ENCODE measurements at regions of chr12 and their contacts with region 1.

Region 1: GRCh38 chr12:47837190-47838171 is 17.8 kb upstream of the HDAC7 start:
- DNase-seq: peak; percentile 77
- ATAC-seq: no peak
- H3K4me3 Mint-ChIP-seq: peak overlapping the region; percentile 31
- H3K27ac Mint-ChIP-seq: peak overlapping the region; percentile 79
- H3K4me1 Mint-ChIP-seq: peaks cover 57% of the 10 kb centered on the region
- H3K27me3 Mint-ChIP-seq: no peaks in the 10 kb centered on the region
- CTCF ChIP-seq: peak; percentile 96

Region 2: DNA sequence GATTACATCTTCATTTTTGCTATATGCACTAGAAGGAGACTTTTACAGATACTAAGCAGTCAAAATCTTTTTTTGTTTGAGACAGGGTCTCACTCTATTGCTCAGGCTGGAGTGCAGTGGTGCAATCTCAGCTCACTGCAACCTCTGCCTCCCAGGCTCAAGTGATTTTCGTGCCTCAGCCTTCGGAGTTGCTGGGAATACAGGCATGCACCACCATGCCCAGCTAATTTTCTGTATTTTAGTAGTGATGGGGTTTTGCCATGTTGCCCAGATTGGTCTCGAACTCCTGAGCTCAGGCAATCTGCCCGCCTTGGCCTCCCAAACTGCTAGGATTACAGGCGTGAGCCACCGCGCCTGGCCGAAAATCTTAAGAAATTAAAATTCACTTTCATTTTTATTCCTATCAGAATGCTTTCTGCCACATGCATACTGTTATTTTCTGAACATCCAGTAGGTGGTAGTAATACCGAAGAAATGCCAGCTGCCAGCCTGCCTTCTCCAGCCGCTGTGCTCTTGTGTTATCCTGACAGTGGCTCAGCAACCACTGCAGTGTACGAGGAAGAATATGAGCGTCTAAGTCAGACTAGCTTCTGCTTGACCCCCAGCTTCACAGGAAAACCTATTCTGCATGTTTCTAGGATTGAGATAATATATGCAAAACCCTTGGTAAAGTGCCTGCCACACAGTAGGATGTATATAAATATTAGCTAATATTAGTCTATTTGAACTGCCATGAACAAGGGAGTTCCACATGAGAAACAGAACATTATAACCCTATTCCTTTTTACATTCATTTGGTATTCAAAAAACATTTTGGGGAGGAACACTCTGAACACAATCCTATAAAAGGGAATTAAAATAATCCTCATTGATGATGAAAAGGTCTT is 185.9 kb before region 1 on chr12:
- CTCF ChIA-PET with region 1: interaction called, 11 read pairs
- POLR2A ChIA-PET with region 1: no interaction called
- intact Hi-C with region 1: no loop called
- DNase-seq: peak; percentile 62
- ATAC-seq: peak; percentile 98
- H3K4me3 Mint-ChIP-seq: no peak overlapping the region
- H3K27ac Mint-ChIP-seq: no peak overlapping the region
- H3K4me1 Mint-ChIP-seq: peaks cover 12% of the 10 kb centered on the region
- H3K27me3 Mint-ChIP-seq: no peaks in the 10 kb centered on the region
- CTCF ChIP-seq: peak; percentile 81

Region 3: GRCh38 chr12:47767216-47767724 is 70.2 kb before region 1 on chr12:
- CTCF ChIA-PET with region 1: interaction called, 164 read pairs
- POLR2A ChIA-PET with region 1: interaction called, 3 read pairs
- intact Hi-C with region 1: no loop called
- DNase-seq: peak; percentile 77
- ATAC-seq: peak; percentile 80
- H3K4me3 Mint-ChIP-seq: no peak overlapping the region
- H3K27ac Mint-ChIP-seq: no peak overlapping the region
- H3K4me1 Mint-ChIP-seq: peaks cover 13% of the 10 kb centered on the region
- H3K27me3 Mint-ChIP-seq: no peaks in the 10 kb centered on the region
- CTCF ChIP-seq: peak; percentile 89

Region 4: DNA sequence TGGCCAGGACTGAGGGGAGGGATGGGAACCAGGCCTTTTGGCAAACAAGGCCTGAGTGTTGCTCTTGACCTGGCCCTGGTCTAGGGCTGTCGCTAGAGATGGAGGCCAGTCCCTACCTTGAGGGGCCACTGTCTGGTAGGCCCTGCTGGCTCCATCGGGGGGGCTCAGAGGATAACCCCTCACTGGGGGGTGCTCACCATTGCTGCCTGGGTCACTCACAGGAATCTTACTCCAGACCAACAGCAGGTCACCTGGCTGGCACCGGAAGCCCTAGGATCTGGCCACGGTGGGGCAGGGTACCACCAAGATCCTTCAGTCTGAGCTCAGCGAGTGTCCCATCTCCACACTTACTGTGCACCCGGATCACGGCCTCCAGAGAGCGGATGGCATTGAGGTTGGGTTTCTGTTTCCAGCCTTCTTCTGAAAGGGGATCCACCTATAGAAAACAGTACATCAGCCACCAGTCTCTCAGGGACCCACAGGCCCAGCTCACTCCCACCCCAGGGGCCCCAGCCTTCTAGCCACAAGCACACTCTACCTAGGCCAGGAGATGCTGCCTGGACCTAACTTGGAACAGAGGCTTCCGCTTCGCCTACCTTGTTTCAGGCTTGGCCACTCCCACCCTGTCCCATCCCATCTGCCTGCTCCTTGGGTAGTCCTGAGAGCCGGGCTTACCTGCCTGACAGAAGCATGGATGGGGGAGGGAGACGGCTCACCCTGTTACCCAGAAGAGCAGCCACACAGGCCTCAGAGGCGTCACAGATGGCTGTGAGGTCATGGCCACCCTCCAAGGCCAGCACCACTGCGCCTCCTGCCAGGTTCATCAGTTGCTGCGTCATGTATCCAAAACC is 52.2 kb before region 1 on chr12:
- CTCF ChIA-PET with region 1: interaction called, 145 read pairs
- POLR2A ChIA-PET with region 1: interaction called, 904 read pairs
- intact Hi-C with region 1: no loop called
- DNase-seq: no peak
- ATAC-seq: peak; percentile 3
- H3K4me3 Mint-ChIP-seq: no peak overlapping the region
- H3K27ac Mint-ChIP-seq: peak overlapping the region; percentile 80
- H3K4me1 Mint-ChIP-seq: peaks cover 35% of the 10 kb centered on the region
- H3K27me3 Mint-ChIP-seq: no peaks in the 10 kb centered on the region
- CTCF ChIP-seq: no peak

Region 5: DNA sequence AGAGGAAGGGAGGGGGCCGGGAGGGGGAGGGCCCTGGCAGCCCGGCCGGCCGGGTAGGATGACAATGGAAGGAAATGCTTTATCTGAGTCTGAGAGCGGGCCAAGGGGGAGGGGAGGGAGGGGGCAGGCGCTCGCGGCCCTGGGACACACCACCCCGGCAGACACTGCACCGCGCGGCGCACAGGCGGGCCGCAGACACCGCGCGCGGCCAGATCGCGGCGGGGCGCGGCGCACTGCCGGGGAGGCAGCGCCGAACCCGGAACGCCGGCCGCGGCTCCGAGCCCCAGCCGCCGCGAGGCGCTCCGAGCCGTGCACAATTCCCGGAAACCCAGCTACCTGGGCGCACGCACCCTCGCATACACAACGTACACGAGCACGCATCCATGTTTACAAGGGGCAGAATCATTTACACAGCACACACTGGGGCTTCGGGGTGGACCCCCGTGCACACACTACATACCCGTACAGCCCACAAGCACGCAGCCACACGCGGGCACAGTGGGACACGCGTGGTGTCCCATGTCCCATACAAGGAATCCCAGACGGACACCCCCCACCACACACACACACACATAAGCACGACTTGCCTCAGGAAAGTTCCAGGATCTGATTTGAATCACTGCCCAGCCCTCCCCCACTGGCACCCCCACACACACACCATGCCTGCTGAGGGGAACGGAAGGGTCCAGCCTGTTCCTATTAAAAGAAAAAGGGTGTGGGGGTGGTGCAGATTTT is 17.4 kb before region 1 on chr12 and contains the start of gene HDAC7:
- CTCF ChIA-PET with region 1: interaction called, 624 read pairs
- POLR2A ChIA-PET with region 1: interaction called, 904 read pairs
- intact Hi-C with region 1: no loop called
- DNase-seq: peak; percentile 87
- ATAC-seq: peak; percentile 52
- H3K4me3 Mint-ChIP-seq: peak within 1 kb of the TSS; percentile 90
- H3K27ac Mint-ChIP-seq: peak within 1 kb of the TSS; percentile 99
- H3K4me1 Mint-ChIP-seq: peaks cover 52% of the 10 kb centered on the region
- H3K27me3 Mint-ChIP-seq: no peaks in the 10 kb centered on the region
- CTCF ChIP-seq: no peak
- total RNA-seq, gene HDAC7: 373 to 382 TPM

Region 6: DNA sequence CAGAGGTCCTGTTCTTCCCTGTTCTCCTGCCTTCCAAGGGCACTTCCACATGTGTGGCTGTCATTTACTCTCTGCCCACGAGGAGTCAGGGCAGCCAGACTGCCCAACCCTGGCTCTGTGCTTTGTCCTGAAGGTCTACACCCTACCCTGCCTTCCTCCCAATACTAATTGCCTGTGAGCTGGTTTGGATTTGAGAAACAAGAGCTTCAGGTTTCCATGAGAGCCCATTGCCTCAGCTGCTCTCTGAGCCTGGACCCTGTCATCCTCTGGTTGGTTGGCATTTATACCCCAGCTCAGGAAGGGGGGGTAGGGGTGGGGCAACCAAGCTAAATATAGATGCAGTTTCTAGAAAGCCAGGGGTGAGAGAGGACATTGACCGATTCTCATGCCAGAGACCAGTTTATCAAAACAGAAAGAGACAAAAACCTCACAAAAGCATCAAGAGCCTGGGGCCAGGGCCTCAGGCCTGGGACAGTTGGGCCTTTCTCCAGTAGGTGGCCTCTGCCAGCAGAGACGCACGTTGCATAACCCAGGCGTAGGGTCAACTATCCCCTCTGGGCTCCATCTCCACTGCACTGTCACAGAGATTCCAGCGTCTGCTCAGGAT is 32.8 kb after region 1 on chr12:
- CTCF ChIA-PET with region 1: interaction called, 16 read pairs
- POLR2A ChIA-PET with region 1: interaction called, 5 read pairs
- intact Hi-C with region 1: no loop called
- DNase-seq: no peak
- ATAC-seq: no peak
- H3K4me3 Mint-ChIP-seq: no peak overlapping the region
- H3K27ac Mint-ChIP-seq: peak overlapping the region; percentile 59
- H3K4me1 Mint-ChIP-seq: peaks cover 48% of the 10 kb centered on the region
- H3K27me3 Mint-ChIP-seq: no peaks in the 10 kb centered on the region
- CTCF ChIP-seq: peak; percentile 49

Region 7: GRCh38 chr12:47963340-47964040 is 126.0 kb after region 1 on chr12 and contains the start of gene TMEM106C:
- CTCF ChIA-PET with region 1: interaction called, 15 read pairs
- POLR2A ChIA-PET with region 1: interaction called, 3 read pairs
- intact Hi-C with region 1: no loop called
- DNase-seq: peak; percentile 94
- ATAC-seq: peak; percentile 98
- H3K4me3 Mint-ChIP-seq: peak within 1 kb of the TSS; percentile 99
- H3K27ac Mint-ChIP-seq: peak within 1 kb of the TSS; percentile 86
- H3K4me1 Mint-ChIP-seq: peaks cover 28% of the 10 kb centered on the region
- H3K27me3 Mint-ChIP-seq: peaks cover 1% of the 10 kb centered on the region
- CTCF ChIP-seq: peak; percentile 92
- total RNA-seq, gene TMEM106C: 148 to 158 TPM

Region 8: GRCh38 chr12:48061948-48062719 is 224.7 kb after region 1 on chr12:
- CTCF ChIA-PET with region 1: no interaction called
- POLR2A ChIA-PET with region 1: no interaction called
- intact Hi-C with region 1: no loop called
- DNase-seq: no peak
- ATAC-seq: no peak
- H3K4me3 Mint-ChIP-seq: no peak overlapping the region
- H3K27ac Mint-ChIP-seq: no peak overlapping the region
- H3K4me1 Mint-ChIP-seq: no peaks in the 10 kb centered on the region
- H3K27me3 Mint-ChIP-seq: no peaks in the 10 kb centered on the region
- CTCF ChIP-seq: no peak

Measured in activated CD8-positive, alpha-beta T cell treated with anti-CD3 and anti-CD28 coated beads for 36 hours (primary cell).